ENCODE measurements at regions of chrX and their contacts with region 1.

Region 1: DNA sequence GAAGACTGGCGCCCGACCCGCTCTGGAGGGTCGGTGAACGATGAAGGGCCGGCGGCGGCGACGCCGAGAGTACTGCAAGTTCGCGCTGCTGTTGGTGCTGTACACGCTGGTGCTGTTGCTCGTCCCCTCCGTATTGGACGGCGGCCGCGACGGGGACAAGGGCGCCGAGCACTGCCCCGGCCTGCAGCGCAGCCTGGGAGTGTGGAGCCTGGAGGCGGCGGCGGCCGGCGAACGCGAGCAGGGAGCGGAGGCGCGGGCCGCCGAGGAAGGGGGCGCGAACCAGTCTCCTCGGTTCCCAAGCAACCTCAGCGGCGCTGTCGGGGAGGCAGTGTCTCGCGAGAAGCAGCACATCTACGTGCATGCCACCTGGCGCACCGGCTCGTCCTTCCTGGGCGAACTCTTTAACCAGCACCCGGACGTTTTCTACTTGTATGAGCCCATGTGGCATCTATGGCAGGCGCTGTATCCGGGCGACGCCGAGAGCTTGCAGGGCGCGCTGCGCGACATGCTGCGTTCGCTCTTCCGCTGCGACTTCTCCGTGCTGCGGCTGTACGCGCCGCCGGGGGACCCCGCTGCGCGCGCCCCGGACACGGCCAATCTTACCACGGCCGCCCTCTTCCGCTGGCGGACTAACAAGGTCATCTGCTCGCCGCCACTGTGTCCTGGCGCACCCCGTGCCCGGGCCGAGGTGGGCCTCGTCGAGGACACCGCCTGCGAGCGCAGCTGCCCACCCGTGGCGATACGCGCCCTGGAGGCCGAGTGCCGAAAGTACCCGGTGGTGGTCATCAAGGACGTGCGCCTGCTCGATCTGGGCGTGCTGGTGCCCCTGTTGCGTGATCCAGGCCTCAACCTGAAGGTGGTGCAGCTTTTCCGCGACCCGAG is 568 bp downstream of the CHST7 start:
- DNase-seq: no peak

Region 2: DNA sequence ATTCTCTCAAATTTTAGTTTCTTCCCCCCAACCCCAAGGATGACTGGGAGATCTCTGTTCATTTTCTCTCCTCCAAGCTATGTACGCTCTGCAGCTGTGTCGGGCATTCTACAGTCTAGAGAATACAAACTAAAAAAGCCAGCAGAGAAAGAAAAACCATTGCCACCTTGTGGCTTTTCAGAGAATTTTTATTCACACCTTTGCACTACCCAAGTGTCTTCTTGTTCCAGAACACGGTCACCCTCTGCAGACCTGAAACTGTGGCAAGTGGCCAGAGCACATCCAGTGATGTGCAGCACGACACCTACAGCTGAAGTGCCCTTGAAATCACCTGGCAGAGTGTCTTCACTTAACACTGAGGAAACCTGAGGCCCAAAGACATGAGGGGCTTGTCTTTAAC is 68.0 kb after region 1 on chrX:
- intact Hi-C with region 1: loop called (anchors 2 kb)
- DNase-seq: no peak